Right lobe of liver (tissue), 6 donors: ENCODE measurements at regions of chr19 and their contacts with region 1.

Region 1: GRCh38 chr19:47243776-47244547 is 12.4 kb upstream of the CCDC9 start:
- DNase-seq: peak; percentile 89 to 93 (median 93)
- ATAC-seq: peak; percentile 89 to 96 (median 94)
- H3K4me3 ChIP-seq: peak overlapping the region in 2 of 3 donors; percentile 16 to 29
- H3K27ac ChIP-seq: no peak overlapping the region
- H3K4me1 ChIP-seq: peaks cover 0 to 12% (median 0%) of the 10 kb centered on the region in 4 donors
- H3K27me3 ChIP-seq: no peaks in the 10 kb centered on the region
- CTCF ChIP-seq: peak; percentile 99
- POLR2A ChIP-seq: peak; percentile 70

Region 2: GRCh38 chr19:47143322-47144073 is 100.5 kb before region 1 on chr19:
- intact Hi-C with region 1: loop called (anchors 5 to 10 kb)
- DNase-seq: no peak
- ATAC-seq: no peak
- H3K4me3 ChIP-seq: no peak overlapping the region
- H3K27ac ChIP-seq: no peak overlapping the region
- H3K4me1 ChIP-seq: no peaks in the 10 kb centered on the region
- H3K27me3 ChIP-seq: no peaks in the 10 kb centered on the region
- CTCF ChIP-seq: no peak
- POLR2A ChIP-seq: no peak

Region 3: DNA sequence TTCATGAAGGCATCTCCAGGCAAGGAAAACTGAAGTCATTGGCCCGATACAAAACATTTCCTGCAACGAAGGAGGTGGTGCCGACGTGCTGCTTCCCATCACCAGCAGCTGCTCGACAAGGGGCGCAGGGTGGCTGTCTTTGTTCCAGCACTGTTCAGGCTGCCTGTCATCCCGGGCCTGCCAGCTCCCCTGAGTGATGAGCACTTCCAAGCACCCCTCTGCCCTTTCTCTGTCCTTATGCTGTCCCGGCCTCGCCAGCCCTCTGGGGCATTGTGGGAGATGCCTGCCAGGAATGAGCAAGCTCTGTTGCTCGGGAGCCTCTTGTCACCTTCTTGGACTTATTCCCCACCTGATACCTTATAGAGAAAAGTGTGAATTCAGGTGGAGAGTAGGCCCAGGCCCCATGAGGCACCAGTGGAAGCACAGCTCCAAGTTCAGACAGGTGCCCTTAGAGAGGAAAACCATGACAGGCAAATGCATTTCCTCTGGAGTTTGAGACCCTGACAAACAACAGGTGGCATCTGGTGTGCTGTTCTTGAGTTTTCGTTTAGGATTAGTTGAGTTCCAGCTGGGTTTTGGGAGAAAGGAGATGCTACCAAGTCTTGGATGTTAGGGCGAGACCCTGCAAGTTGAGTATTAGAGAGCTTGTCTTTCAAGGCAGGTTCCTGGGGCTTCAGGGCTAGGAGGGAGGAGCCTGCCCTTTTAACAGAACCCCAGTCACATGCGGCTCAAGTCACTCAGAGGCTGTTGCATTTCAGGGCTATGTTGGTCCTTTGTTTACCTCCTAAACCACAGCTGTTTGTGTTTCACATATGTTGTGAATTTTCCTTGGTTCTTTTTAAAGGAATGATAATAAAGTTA is 34.4 kb before region 1 on chr19:
- intact Hi-C with region 1: loop called (anchors 5 kb)
- DNase-seq: no peak
- ATAC-seq: no peak
- H3K4me3 ChIP-seq: no peak overlapping the region
- H3K27ac ChIP-seq: no peak overlapping the region
- H3K4me1 ChIP-seq: peaks cover 0 to 6% (median 0%) of the 10 kb centered on the region in 4 donors
- H3K27me3 ChIP-seq: no peaks in the 10 kb centered on the region
- CTCF ChIP-seq: no peak
- POLR2A ChIP-seq: no peak